Ascending aorta (tissue), 2 donors: ENCODE measurements at regions of chr6 and their contacts with region 1.

Region 1: GRCh38 chr6:39980839-39981580 is 46.7 kb upstream of the MOCS1 start:
- DNase-seq: no peak
- H3K4me3 ChIP-seq: no peak overlapping the region
- H3K27ac ChIP-seq: peak overlapping the region; percentile 62 to 65
- H3K4me1 ChIP-seq: peaks cover 0 to 24% of the 10 kb centered on the region in 2 donors
- H3K27me3 ChIP-seq: no peaks in the 10 kb centered on the region
- CTCF ChIP-seq: peak; percentile 43 to 57 (median 56)

Region 2: DNA sequence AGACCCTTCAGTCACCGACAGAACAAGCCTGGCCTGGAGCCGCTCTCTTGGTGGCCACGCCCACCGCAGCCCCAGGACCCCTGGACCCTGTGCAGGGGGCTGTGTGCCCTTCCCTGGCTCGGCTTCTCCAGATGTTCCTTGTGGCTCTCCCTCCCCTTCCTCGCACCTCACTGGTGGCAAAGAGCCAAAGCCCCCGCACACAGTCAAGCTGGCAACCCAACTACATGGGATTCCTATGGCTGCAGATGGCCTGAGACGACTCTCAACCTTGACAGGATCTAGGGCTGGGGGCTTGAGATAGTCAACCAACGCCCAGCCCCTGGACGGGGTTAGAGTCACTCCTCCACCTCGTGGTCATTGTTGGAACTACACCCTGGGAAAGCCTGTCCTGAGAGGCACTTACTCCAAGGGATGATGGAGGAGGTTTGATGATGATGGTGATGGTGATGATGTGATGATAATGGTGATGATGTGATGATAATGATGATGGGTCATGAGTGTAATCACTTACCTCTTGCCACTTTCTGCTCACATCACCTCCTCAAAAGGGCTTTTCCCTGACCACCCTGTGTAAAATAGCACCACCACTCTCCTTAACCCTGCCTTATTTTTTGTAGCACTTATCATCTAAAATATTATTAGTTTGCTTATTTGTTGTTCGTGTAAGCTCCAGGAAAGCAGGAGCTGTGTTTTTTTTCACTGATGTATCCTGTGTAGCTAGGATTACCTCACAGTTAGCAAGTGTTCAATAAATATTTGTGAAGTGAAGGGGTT is 327.7 kb after region 1 on chr6:
- intact Hi-C with region 1: loop called (anchors 2 kb)
- DNase-seq: peak in 1 of 2 donors; percentile 66
- H3K4me3 ChIP-seq: no peak overlapping the region
- H3K27ac ChIP-seq: no peak overlapping the region
- H3K4me1 ChIP-seq: no peaks in the 10 kb centered on the region
- H3K27me3 ChIP-seq: no peaks in the 10 kb centered on the region
- CTCF ChIP-seq: peak; percentile 53 to 79 (median 69)